A549 (cell line): ENCODE measurements at regions of chr3 and their contacts with region 1.

Region 1: GRCh38 chr3:151327571-151328198 is 1.7 kb downstream of the P2RY13 start:
- DNase-seq: peak; percentile 18
- ATAC-seq: peak; percentile 63 to 75; a peak in 3 of 6 replicates
- H3K4me3 ChIP-seq: no peak overlapping the region
- H3K27ac ChIP-seq: no peak overlapping the region; a peak in 2 of 6 replicates
- H3K4me1 ChIP-seq: peaks cover 13% of the 10 kb centered on the region; the same call in 2 of the 3 replicates
- CTCF ChIP-seq: peak; percentile 72
- EP300 ChIP-seq: no peak
- POLR2A ChIP-seq: no peak
- RAD21 ChIP-seq: peak; percentile 42 to 45; a peak in 3 of 5 replicates

Region 2: GRCh38 chr3:151265866-151266265 is 61.8 kb before region 1 on chr3:
- CTCF ChIA-PET with region 1: no interaction called
- POLR2A ChIA-PET with region 1: no interaction called
- DNase-seq: no peak
- ATAC-seq: no peak
- H3K4me3 ChIP-seq: no peak overlapping the region
- H3K27ac ChIP-seq: no peak overlapping the region
- H3K4me1 ChIP-seq: no peaks in the 10 kb centered on the region
- CTCF ChIP-seq: no peak
- EP300 ChIP-seq: no peak
- POLR2A ChIP-seq: no peak
- RAD21 ChIP-seq: no peak

Region 3: DNA sequence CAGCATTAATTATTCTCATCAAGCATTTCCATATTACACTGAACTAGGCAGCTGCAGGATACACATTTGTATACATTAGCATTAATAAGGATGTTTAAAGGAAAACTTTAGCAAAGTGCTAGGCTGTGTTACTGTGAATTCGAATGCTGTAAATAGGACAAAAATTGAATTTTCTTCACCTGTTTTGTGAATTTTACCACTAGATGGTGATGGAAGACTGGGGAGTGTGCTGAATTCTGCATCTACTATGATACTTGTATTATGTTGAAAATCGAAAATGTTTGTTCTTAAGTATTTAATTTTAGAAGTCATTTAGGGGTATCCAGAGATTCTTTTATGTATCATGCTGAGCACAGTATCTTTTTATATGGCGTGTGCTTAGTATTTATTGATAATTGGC is 37.0 kb before region 1 on chr3:
- CTCF ChIA-PET with region 1: interaction called, 18 read pairs
- POLR2A ChIA-PET with region 1: no interaction called
- DNase-seq: peak in 1 of 2 experiments; percentile 48
- ATAC-seq: peak; percentile 47 to 54; a peak in 1 of 6 replicates
- H3K4me3 ChIP-seq: no peak overlapping the region
- H3K27ac ChIP-seq: no peak overlapping the region
- H3K4me1 ChIP-seq: no peaks in the 10 kb centered on the region
- CTCF ChIP-seq: peak; percentile 89
- EP300 ChIP-seq: no peak
- POLR2A ChIP-seq: no peak
- RAD21 ChIP-seq: peak; percentile 92 to 94

Region 4: GRCh38 chr3:151305101-151305750 is 22.5 kb before region 1 on chr3:
- CTCF ChIA-PET with region 1: interaction called, 47 read pairs
- POLR2A ChIA-PET with region 1: interaction called, 11 read pairs
- DNase-seq: peak; percentile 61 to 82
- ATAC-seq: peak; percentile 97
- H3K4me3 ChIP-seq: no peak overlapping the region
- H3K27ac ChIP-seq: peak overlapping the region; percentile 72 to 84
- H3K4me1 ChIP-seq: peaks cover 26% of the 10 kb centered on the region
- CTCF ChIP-seq: peak; percentile 28; the same call in 1 of the 3 replicates
- EP300 ChIP-seq: peak in 1 of 2 experiments; percentile 40; a peak in 1 of 5 replicates
- POLR2A ChIP-seq: no peak
- RAD21 ChIP-seq: peak; percentile 37 to 46

Region 5: DNA sequence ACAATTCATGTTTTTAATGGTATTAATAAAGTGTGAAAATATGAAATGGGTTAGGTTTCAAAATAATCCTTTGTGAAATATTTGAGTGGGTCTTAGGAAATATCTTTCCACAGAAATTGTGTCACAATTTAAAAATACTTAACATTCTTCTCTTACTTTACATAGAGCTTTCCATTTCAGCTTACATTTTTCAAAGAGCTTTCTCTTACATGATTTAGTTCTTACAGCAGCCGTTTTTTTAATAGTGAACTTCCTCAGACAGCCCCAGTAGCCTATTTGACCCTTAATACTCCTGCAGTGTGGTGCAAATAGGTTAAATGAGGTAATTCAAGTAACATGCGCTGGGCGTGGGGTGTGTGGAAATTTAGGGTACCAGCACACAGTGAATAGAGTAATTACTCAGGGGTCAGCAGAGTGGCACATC is 35.1 kb after region 1 on chr3:
- CTCF ChIA-PET with region 1: interaction called, 11 read pairs
- POLR2A ChIA-PET with region 1: no interaction called
- DNase-seq: no peak
- ATAC-seq: no peak
- H3K4me3 ChIP-seq: no peak overlapping the region
- H3K27ac ChIP-seq: no peak overlapping the region
- H3K4me1 ChIP-seq: no peaks in the 10 kb centered on the region
- CTCF ChIP-seq: no peak
- EP300 ChIP-seq: no peak
- POLR2A ChIP-seq: no peak
- RAD21 ChIP-seq: no peak